GM12878 (cell line): ENCODE measurements at regions of chr10 and their contacts with region 1.

Region 1: GRCh38 chr10:99435986-99436638 is 5.7 kb upstream of the GOT1 start:
- DNase-seq: no peak
- ATAC-seq: peak; percentile 77
- H3K4me3 ChIP-seq: no peak overlapping the region
- H3K27ac ChIP-seq: no peak overlapping the region
- H3K4me1 ChIP-seq: no peaks in the 10 kb centered on the region
- H3K27me3 ChIP-seq: no peaks in the 10 kb centered on the region
- CTCF ChIP-seq: peak; percentile 24 to 59 (median 44); a peak in 5 of 6 replicates
- EP300 ChIP-seq: no peak
- POLR2A ChIP-seq: no peak
- RAD21 ChIP-seq: peak; percentile 64

Region 2: GRCh38 chr10:99395750-99396445 is 40.2 kb before region 1 on chr10:
- CTCF ChIA-PET with region 1: interaction called, 25 read pairs
- POLR2A ChIA-PET with region 1: no interaction called
- RAD21 ChIA-PET with region 1: interaction called, 8 read pairs
- SMC1A ChIA-PET with region 1: interaction called, 11 read pairs
- in situ Hi-C with region 1: no loop called
- intact Hi-C with region 1: loop called (anchors 2 kb)
- DNase-seq: no peak
- ATAC-seq: no peak
- H3K4me3 ChIP-seq: no peak overlapping the region
- H3K27ac ChIP-seq: no peak overlapping the region
- H3K4me1 ChIP-seq: no peaks in the 10 kb centered on the region
- H3K27me3 ChIP-seq: no peaks in the 10 kb centered on the region
- CTCF ChIP-seq: no peak
- EP300 ChIP-seq: no peak
- POLR2A ChIP-seq: no peak
- RAD21 ChIP-seq: no peak

Region 3: GRCh38 chr10:99421233-99421739 is 14.8 kb before region 1 on chr10:
- CTCF ChIA-PET with region 1: interaction called, 27 read pairs
- POLR2A ChIA-PET with region 1: no interaction called
- RAD21 ChIA-PET with region 1: no interaction called
- SMC1A ChIA-PET with region 1: interaction called, 3 read pairs
- in situ Hi-C with region 1: no loop called
- intact Hi-C with region 1: no loop called
- DNase-seq: no peak
- ATAC-seq: no peak
- H3K4me3 ChIP-seq: no peak overlapping the region
- H3K27ac ChIP-seq: no peak overlapping the region
- H3K4me1 ChIP-seq: no peaks in the 10 kb centered on the region
- H3K27me3 ChIP-seq: no peaks in the 10 kb centered on the region
- CTCF ChIP-seq: no peak
- EP300 ChIP-seq: no peak
- POLR2A ChIP-seq: no peak
- RAD21 ChIP-seq: no peak

Region 4: DNA sequence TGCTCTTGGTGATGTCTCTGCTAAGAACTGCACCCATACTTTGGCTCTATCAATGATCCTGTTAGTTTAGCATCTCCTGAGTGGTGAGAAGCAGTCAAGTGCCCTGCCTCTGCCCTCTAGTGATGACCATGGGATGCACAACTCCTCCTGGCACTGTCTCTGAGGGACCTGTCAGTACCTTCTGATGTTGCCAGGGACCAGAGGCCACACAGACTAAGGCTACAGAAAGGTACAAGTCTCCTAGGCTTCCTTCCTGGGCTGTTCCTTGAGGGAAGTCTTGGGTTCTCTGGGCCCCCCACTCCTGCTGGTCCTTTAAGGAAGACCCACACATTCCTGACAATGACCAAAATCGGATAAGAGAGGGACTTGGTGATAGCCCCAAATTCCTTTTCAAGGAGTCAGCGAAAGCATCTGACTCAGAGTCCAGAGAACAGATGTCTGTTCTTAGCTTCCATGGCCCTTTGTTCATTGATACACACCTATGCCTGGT is 112.0 kb after region 1 on chr10:
- CTCF ChIA-PET with region 1: interaction called, 30 read pairs
- POLR2A ChIA-PET with region 1: no interaction called
- RAD21 ChIA-PET with region 1: interaction called, 6 read pairs
- SMC1A ChIA-PET with region 1: interaction called, 8 read pairs
- in situ Hi-C with region 1: no loop called
- intact Hi-C with region 1: loop called (anchors 2 kb)
- DNase-seq: no peak
- ATAC-seq: peak; percentile 89
- H3K4me3 ChIP-seq: no peak overlapping the region
- H3K27ac ChIP-seq: no peak overlapping the region
- H3K4me1 ChIP-seq: no peaks in the 10 kb centered on the region
- H3K27me3 ChIP-seq: peaks cover 2 to 5% of the 10 kb centered on the region in 2 experiments; a peak in 3 of 4 replicates
- CTCF ChIP-seq: peak; percentile 40 to 53 (median 41); a peak in 5 of 6 replicates
- EP300 ChIP-seq: no peak
- POLR2A ChIP-seq: no peak
- RAD21 ChIP-seq: 0 out of 2 replicates have a peak, but pooled peaks have one; percentile 30

Region 5: DNA sequence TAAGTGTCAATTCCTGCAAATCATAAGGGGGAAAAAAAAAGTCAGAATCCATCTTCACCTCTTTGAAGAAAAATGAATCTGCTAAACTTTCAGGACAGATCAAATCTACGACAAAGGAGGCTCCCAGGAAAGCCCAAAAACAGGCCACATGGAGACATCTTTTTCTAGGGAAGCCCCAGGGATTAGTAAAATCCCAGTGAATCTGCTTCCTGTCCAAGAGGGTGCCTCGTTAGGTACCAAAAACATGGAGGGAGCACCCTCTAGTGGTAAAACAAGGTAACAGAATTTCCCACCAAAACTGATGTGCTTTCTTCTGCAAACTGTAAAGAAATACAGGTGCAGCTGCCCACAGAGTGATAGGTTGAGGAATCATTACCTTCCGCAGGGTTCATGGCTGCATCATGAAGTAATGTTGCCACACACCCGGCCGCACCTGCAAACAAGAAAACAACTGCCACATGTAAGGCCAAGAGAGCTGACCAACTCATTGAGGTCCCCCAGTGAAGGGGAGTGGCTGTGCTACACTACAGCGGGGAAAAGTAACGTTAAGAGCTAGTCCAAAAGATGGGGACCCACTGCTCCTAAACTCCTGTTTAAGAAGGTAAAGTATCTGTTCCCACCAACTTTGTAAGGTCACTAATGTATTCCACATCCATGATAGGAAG is 176.2 kb after region 1 on chr10:
- CTCF ChIA-PET with region 1: interaction called, 233 read pairs
- POLR2A ChIA-PET with region 1: interaction called, 3 read pairs
- RAD21 ChIA-PET with region 1: interaction called, 70 read pairs
- SMC1A ChIA-PET with region 1: interaction called, 38 read pairs
- in situ Hi-C with region 1: loop called (anchors 5 kb)
- intact Hi-C with region 1: loop called (anchors 1 kb)
- DNase-seq: no peak
- ATAC-seq: peak; percentile 83
- H3K4me3 ChIP-seq: no peak overlapping the region
- H3K27ac ChIP-seq: no peak overlapping the region
- H3K4me1 ChIP-seq: no peaks in the 10 kb centered on the region
- H3K27me3 ChIP-seq: no peaks in the 10 kb centered on the region
- CTCF ChIP-seq: peak; percentile 82 to 86 (median 86); a peak in 5 of 6 replicates
- EP300 ChIP-seq: no peak
- POLR2A ChIP-seq: no peak; the same call in 1 of the 2 replicates
- RAD21 ChIP-seq: peak; percentile 87

Region 6: DNA sequence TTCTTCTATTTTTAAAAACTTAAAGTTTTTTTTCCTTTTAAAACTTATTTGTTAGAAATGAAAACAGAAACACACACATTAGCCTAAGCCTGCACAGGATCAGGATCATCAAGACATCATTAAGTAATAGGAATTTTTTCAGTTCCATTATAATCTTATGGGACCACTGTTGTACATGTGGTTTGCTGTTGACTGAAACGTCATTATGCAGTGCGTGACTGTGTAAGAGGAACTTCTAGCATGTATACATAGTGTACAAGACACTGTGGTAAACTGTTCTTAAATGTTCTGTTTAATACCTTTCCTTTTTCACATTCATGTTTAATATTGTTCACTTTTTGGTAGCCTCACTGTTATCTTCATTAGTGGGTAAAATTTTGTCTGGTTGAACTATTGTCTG is 235.3 kb after region 1 on chr10:
- CTCF ChIA-PET with region 1: no interaction called
- POLR2A ChIA-PET with region 1: no interaction called
- RAD21 ChIA-PET with region 1: no interaction called
- SMC1A ChIA-PET with region 1: no interaction called
- in situ Hi-C with region 1: no loop called
- intact Hi-C with region 1: no loop called
- DNase-seq: no peak
- ATAC-seq: no peak
- H3K4me3 ChIP-seq: no peak overlapping the region
- H3K27ac ChIP-seq: no peak overlapping the region
- H3K4me1 ChIP-seq: no peaks in the 10 kb centered on the region
- H3K27me3 ChIP-seq: no peaks in the 10 kb centered on the region
- CTCF ChIP-seq: no peak
- EP300 ChIP-seq: no peak
- POLR2A ChIP-seq: no peak
- RAD21 ChIP-seq: no peak

Region 7: DNA sequence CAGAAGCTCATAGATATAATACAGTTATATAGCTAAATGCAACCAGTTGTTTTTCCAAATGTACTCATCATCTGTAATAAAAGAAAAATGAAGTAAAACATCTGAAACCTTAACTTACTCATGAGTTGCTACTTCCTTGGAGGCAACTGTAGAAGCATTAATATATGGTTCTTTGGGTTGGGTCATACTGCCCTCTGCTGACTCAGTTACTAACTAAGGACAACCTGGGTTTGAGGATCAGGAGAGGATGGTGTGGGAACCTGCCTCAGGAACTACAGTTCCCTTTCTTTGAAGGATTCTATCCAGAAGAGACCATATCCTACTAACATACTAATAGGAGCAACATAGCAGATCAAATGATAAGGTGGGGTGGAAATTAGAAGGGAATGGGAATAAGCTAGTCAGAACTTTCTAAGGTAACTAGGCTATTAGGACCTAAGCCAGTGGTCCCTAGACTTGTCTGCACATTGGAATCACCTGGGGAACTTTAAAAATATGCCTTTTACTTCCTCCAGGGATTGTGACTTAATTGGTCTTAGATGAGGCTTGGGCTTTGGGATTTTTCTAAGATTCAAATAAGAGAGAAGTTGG is 275.1 kb after region 1 on chr10:
- CTCF ChIA-PET with region 1: interaction called, 43 read pairs
- POLR2A ChIA-PET with region 1: no interaction called
- RAD21 ChIA-PET with region 1: interaction called, 15 read pairs
- SMC1A ChIA-PET with region 1: interaction called, 14 read pairs
- in situ Hi-C with region 1: loop called (anchors 5 kb)
- intact Hi-C with region 1: loop called (anchors 1 kb)
- DNase-seq: peak; percentile 15
- ATAC-seq: peak; percentile 85
- H3K4me3 ChIP-seq: no peak overlapping the region
- H3K27ac ChIP-seq: no peak overlapping the region
- H3K4me1 ChIP-seq: peaks cover 6% of the 10 kb centered on the region; the same call in 1 of the 2 replicates
- H3K27me3 ChIP-seq: no peaks in the 10 kb centered on the region
- CTCF ChIP-seq: peak; percentile 57 to 73 (median 60)
- EP300 ChIP-seq: no peak
- POLR2A ChIP-seq: no peak
- RAD21 ChIP-seq: peak; percentile 78